PC-3 (cell line): ENCODE measurements at regions of chr3 and their contacts with region 1.

Region 1: GRCh38 chr3:58299839-58300516 is 6.1 kb upstream of the RPP14 start:
- DNase-seq: peak; percentile 61
- ATAC-seq: peak; percentile 61
- H3K4me3 ChIP-seq: no peak overlapping the region
- H3K27ac ChIP-seq: no peak overlapping the region
- H3K4me1 ChIP-seq: no peaks in the 10 kb centered on the region
- H3K27me3 ChIP-seq: no peaks in the 10 kb centered on the region
- CTCF ChIP-seq: peak; percentile 79

Region 2: GRCh38 chr3:58188173-58188564 is 111.8 kb before region 1 on chr3:
- CTCF ChIA-PET with region 1: interaction called, 40 read pairs
- POLR2A ChIA-PET with region 1: no interaction called
- intact Hi-C with region 1: loop called (anchors 1 kb)
- DNase-seq: peak; percentile 84
- ATAC-seq: peak; percentile 72
- H3K4me3 ChIP-seq: no peak overlapping the region
- H3K27ac ChIP-seq: peak overlapping the region; percentile 77
- H3K4me1 ChIP-seq: peaks cover 23% of the 10 kb centered on the region
- H3K27me3 ChIP-seq: no peaks in the 10 kb centered on the region
- CTCF ChIP-seq: no peak

Region 3: GRCh38 chr3:58237238-58237940 is 62.6 kb before region 1 on chr3 and contains the start of gene ABHD6:
- CTCF ChIA-PET with region 1: interaction called, 4 read pairs
- POLR2A ChIA-PET with region 1: no interaction called
- intact Hi-C with region 1: loop called (anchors 2 kb)
- DNase-seq: peak; percentile 66
- ATAC-seq: peak; percentile 72
- H3K4me3 ChIP-seq: peak within 1 kb of the TSS; percentile 99
- H3K27ac ChIP-seq: peak within 1 kb of the TSS; percentile 40
- H3K4me1 ChIP-seq: peaks cover 32% of the 10 kb centered on the region
- H3K27me3 ChIP-seq: no peaks in the 10 kb centered on the region
- CTCF ChIP-seq: peak; percentile 46; the same call in 1 of the 2 replicates
- total RNA-seq, gene ABHD6: 11.6 and 13.4 TPM in 2 replicates

Region 4: DNA sequence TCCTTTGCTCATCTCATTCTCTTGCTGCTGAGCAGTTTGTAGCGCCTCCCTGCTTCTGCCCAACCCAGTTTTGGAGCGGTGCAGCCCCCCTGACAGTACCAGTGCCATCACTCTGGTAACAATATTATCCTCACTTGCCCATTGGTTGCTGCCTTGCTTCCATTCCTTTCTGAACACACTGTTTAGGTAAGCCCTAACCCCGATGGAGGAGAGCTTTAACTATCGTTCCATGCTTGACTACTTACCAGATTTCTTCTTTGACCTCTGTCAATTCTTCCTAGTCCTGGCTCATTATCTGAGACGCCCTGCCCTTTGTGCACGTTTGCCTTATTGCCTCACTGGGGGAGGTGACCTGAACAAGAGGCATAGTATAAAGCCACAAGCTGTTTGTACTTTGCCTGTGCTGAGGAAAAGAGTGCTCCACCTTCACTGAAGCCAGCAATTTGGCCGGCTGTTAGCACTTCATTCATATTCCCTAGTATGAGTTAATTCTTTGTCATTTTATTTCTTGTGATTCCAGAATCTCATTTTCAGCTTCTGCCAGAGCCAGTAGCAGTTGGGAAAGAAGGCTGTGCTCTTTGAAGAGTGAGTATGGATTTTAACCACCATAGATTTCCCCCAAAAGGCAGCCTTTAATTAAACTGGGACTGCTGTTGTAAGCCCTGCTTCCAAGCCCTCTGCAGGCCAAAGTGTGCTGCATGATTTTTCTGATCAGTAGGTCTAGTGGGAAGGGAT is 50.5 kb before region 1 on chr3:
- CTCF ChIA-PET with region 1: interaction called, 13 read pairs
- POLR2A ChIA-PET with region 1: no interaction called
- intact Hi-C with region 1: no loop called
- DNase-seq: no peak
- ATAC-seq: no peak
- H3K4me3 ChIP-seq: no peak overlapping the region
- H3K27ac ChIP-seq: no peak overlapping the region
- H3K4me1 ChIP-seq: peaks cover 11% of the 10 kb centered on the region; the same call in 1 of the 2 replicates
- H3K27me3 ChIP-seq: no peaks in the 10 kb centered on the region
- CTCF ChIP-seq: peak; percentile 40; the same call in 1 of the 2 replicates

Region 5: GRCh38 chr3:60064210-60065178 is 1764.5 kb after region 1 on chr3:
- CTCF ChIA-PET with region 1: no interaction called
- POLR2A ChIA-PET with region 1: no interaction called
- intact Hi-C with region 1: no loop called
- DNase-seq: peak; percentile 22
- ATAC-seq: no peak
- H3K4me3 ChIP-seq: no peak overlapping the region
- H3K27ac ChIP-seq: no peak overlapping the region
- H3K4me1 ChIP-seq: no peaks in the 10 kb centered on the region
- H3K27me3 ChIP-seq: 0 out of 2 replicates have a peak, but pooled peaks cover 3% of the 10 kb centered on the region
- CTCF ChIP-seq: no peak